ENCODE measurements at regions of chr19 and their contacts with region 1.

Region 1: DNA sequence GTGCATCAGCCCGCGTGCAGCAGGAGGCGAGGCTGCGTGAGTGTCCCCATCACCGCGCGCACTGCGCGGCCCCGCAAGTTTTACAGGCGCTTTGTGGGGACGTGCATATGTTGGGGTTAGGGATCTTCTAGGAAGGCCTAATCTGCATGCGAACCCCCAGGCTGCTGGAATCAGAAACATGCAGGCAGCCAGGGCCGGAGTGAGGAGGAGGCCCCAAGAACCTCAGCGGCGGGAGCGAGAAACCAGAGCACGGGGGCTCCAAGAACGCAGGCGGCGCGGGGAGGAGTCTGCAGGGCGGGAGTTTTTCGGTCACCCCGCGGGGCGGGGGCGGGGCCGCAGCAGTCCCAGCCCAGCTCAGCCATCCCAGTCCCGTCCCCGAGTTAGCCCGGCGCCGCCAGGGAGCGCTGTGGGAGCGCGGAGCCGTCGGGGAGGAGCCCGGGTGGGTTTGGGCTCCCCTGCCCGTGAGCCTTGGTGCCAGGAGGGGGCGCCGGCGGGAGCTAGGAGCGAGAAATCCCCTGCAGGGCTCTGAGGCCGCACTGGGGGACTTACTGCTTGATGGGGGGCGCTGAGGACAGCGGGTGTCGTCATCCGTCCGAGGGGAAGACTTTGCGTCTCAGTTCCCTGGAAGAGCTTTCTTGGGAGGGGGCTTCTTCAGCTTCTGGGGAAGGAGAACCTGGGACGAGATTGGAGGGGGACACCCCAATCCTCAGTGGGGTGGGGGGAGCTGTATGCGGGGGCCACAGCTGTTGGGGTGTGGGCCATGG is 933 bp upstream of the NRTN start:
- H3K4me3 ChIP-seq: peak overlapping the region; percentile 25
- H3K27ac ChIP-seq: no peak overlapping the region
- H3K4me1 ChIP-seq: peaks cover 3% of the 10 kb centered on the region; the same call in 1 of the 2 replicates
- CTCF ChIP-seq: peak; percentile 99

Region 2: DNA sequence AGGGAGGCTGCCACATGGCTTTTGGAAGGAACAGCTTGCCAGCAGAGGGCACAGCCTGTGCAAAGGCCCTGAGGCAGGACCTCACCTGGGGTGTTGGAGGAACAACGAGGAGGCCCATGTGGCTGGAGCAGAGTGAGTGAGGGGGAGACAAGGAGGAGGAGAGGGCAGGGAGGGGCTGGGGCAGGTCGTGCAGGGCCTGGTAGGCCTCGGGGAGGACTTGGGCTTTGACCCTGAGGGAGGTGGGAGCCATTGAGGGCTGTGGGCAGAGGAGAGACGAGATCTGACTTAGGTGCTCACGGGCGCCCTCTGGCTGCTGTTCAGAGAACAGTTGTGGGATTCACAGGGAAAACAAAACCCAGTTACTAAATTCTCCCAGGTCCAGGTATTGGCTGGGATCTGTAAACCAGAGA is 323.5 kb before region 1 on chr19:
- CTCF ChIA-PET with region 1: no interaction called
- POLR2A ChIA-PET with region 1: no interaction called
- H3K4me3 ChIP-seq: no peak overlapping the region
- H3K27ac ChIP-seq: no peak overlapping the region
- H3K4me1 ChIP-seq: no peaks in the 10 kb centered on the region
- CTCF ChIP-seq: peak; percentile 55; the same call in 1 of the 2 replicates

Region 3: GRCh38 chr19:5775668-5776309 is 28.1 kb before region 1 on chr19:
- CTCF ChIA-PET with region 1: interaction called, 23 read pairs
- POLR2A ChIA-PET with region 1: no interaction called
- H3K4me3 ChIP-seq: no peak overlapping the region
- H3K27ac ChIP-seq: no peak overlapping the region
- H3K4me1 ChIP-seq: no peaks in the 10 kb centered on the region
- CTCF ChIP-seq: no peak

Region 4: GRCh38 chr19:5827891-5828660 is 24.1 kb after region 1 on chr19:
- CTCF ChIA-PET with region 1: interaction called, 44 read pairs
- POLR2A ChIA-PET with region 1: interaction called, 10 read pairs
- H3K4me3 ChIP-seq: peak overlapping the region; percentile 34
- H3K27ac ChIP-seq: peak overlapping the region; percentile 59; the same call in 1 of the 2 replicates
- H3K4me1 ChIP-seq: peaks cover 6% of the 10 kb centered on the region
- CTCF ChIP-seq: no peak

Region 5: GRCh38 chr19:5897189-5897969 is 93.4 kb after region 1 on chr19:
- CTCF ChIA-PET with region 1: interaction called, 65 read pairs
- POLR2A ChIA-PET with region 1: interaction called, 19 read pairs
- H3K4me3 ChIP-seq: no peak overlapping the region
- H3K27ac ChIP-seq: no peak overlapping the region
- H3K4me1 ChIP-seq: no peaks in the 10 kb centered on the region
- CTCF ChIP-seq: no peak

Region 6: DNA sequence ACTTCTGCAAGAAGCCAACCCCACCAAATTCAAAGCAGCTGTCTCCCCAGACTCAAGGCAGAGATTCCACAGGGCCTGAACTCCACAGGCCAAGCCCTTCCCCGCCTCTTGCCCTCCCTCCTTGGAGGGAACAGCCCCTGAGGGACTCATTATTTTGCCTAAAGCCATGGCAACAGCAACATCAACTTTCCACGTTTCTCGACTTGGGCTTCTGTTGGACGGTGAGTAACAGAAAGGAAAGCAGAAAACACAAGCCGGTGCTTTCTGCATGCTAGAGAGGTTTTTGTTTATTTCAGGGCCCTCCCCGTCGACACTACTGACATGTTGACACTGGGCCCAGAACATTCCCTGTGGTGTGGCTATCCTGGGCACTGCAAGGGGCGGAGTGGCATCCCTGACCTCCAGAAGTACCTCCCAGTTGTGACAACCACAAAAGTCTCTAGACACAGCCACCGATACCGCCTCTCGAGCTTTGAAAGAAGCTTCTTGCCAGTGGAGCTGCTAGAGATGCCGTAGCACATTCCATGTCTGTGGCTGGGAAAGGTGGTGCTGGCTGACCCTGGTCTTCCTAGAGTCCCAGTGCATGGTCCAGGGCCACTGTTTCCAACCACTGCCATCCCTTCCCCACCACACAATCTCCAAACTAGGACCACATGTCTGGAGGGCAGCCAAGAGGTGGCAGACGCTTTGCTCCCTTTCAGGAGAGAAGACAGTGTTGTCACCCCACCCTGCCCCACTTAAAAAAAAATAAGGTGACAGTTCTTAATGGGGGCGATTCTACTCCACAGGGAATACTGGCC is 122.9 kb after region 1 on chr19:
- CTCF ChIA-PET with region 1: no interaction called
- POLR2A ChIA-PET with region 1: no interaction called
- H3K4me3 ChIP-seq: no peak overlapping the region
- H3K27ac ChIP-seq: no peak overlapping the region
- H3K4me1 ChIP-seq: no peaks in the 10 kb centered on the region
- CTCF ChIP-seq: no peak

Region 7: DNA sequence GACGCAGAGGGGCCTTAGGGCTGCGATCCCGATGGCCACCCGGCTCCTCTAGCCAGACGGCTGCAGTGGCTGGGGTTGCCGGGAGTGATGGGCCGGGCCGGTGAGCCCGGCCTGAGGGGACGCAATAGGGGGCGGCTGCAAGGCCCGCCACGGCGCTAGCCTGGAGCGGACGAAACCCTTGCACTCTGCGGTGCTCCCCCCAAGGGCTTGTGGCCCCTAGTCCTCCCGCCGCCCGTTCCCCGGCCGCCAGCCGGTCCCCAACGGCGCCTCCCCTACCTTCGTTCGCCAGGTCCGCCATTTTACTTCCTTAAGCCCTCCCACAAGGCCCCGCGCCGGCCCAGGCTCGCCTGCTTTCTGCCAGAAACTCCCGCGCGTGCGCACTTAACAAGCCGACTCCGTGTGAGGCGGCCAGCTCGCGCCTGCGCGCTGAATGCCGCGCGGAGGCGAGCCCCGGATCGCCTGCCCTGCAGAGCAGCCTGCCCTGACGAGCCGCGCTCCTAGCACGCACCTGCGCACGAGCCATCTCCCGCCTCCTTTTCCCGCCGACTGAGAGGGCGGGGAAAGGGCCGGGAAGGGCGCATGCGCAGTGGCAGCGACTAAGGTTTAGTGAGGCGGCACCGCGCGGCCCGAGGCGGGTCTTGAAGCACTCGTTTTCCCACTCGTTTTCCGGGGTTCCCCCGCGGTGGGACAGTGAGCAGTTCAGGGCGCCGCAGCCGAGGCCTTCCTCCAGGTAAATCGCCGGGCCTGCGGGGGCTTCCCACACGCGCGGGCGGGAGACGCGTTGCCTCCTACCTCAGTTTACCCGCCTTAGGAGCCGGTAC is 174.1 kb after region 1 on chr19 and contains the start of gene RANBP3:
- CTCF ChIA-PET with region 1: interaction called, 20 read pairs
- POLR2A ChIA-PET with region 1: no interaction called
- H3K4me3 ChIP-seq: peak within 1 kb of the TSS; percentile 98
- H3K27ac ChIP-seq: peak within 1 kb of the TSS; percentile 91
- H3K4me1 ChIP-seq: peaks cover 11% of the 10 kb centered on the region
- CTCF ChIP-seq: no peak; the same call in 1 of the 2 replicates